ENCODE measurements at regions of chr4 and their contacts with region 1.

Region 1: DNA sequence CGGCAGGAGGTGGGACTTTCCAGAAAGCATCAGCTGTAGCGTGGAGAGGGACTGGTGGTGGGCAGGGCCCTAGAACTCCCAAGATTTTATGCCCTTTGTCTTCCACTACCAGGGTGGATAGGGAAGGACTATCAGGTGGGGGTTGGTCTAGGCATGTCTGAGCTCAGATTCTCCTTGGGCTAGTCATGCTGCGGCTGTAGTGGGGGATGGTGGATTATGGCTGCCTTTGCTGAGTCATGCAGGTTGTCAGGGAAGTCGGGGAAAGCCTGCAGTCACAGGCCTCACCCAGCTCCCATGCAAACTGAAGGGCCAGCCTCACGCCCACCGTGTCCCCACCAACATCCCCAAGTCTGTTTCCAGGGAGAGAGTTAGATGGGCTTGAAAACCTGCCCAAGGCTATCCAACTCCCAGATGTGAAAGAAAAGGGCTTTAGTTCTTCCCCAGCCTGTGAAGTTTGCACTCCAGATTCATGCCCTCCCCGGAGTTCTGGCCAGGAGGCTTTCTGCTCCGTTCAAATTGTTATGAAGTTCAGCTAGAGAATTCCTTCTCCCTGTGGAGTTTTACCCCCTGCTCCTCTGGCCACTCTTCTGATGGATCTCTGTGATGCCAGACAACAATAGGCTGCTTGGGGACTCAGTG is 13.4 kb upstream of the MEPE start:
- DNase-seq: peak; percentile 52
- H3K4me3 ChIP-seq: no peak overlapping the region
- H3K27ac ChIP-seq: peak overlapping the region; percentile 70
- H3K27me3 ChIP-seq: no peaks in the 10 kb centered on the region
- CTCF ChIP-seq: no peak

Region 2: DNA sequence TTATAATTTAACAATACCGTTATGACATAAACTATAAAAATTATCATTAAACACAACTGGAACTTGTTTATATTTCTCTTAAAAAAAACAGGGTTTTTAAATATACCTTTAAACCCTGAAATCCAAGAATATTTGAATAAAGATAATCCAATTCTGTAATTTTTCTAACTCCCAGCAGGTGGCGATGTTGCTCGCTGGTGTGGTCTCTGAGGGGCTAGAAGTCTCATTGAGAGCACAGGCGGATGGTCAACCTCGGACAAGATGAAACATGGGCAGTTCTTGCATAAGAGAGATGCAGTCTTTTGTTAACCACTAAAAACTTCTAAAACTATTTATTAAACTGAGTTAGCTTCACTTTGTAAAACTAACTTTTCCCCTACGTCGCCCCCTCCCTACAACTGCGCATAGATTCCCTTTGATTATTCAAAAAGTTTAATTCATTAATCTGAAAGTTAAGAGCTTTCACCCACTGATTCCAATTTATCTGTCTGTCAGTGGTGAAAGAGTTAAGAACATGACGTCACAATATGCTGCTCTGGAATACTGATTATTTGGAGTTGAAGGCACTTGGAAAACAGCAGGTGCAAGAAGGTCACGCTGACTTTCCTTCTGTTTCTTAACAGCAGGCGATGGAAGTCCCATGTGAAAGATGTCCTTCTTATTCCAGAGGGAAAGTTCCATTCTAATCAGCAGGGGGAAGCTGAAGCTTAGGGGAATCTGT is 139.8 kb before region 1 on chr4:
- CTCF ChIA-PET with region 1: interaction called, 11 read pairs
- POLR2A ChIA-PET with region 1: no interaction called
- DNase-seq: peak; percentile 46
- H3K4me3 ChIP-seq: no peak overlapping the region
- H3K27ac ChIP-seq: no peak overlapping the region
- H3K27me3 ChIP-seq: peaks cover 3% of the 10 kb centered on the region
- CTCF ChIP-seq: peak; percentile 79